Ascending aorta (tissue), 2 donors: ENCODE measurements at regions of chrX and their contacts with region 1.

Region 1: GRCh38 chrX:15674841-15675489 is 10.4 kb upstream of the CLTRN start:
- DNase-seq: peak; percentile 94 to 99
- H3K4me3 ChIP-seq: peak overlapping the region; percentile 80 to 87
- H3K27ac ChIP-seq: peak overlapping the region; percentile 97 to 99
- H3K4me1 ChIP-seq: peaks cover 0 to 8% of the 10 kb centered on the region in 2 donors
- H3K27me3 ChIP-seq: no peaks in the 10 kb centered on the region
- CTCF ChIP-seq: no peak

Region 2: GRCh38 chrX:13898083-13898482 is 1776.9 kb before region 1 on chrX:
- intact Hi-C with region 1: loop called (anchors 2 kb)
- DNase-seq: peak in 1 of 2 donors; percentile 69
- H3K4me3 ChIP-seq: no peak overlapping the region
- H3K27ac ChIP-seq: peak overlapping the region in 1 of 2 donors; percentile 23
- H3K4me1 ChIP-seq: peaks cover 0 to 33% of the 10 kb centered on the region in 2 donors
- H3K27me3 ChIP-seq: no peaks in the 10 kb centered on the region
- CTCF ChIP-seq: peak in 2 of 3 experiments; percentile 29 to 32

Region 3: GRCh38 chrX:15335135-15336022 is 339.6 kb before region 1 on chrX and contains the start of gene PIGA:
- intact Hi-C with region 1: loop called (anchors 10 kb)
- DNase-seq: peak; percentile 88 to 98
- H3K4me3 ChIP-seq: peak within 1 kb of the TSS; percentile 64 to 73
- H3K27ac ChIP-seq: peak within 1 kb of the TSS; percentile 77 to 85
- H3K4me1 ChIP-seq: no peaks in the 10 kb centered on the region
- H3K27me3 ChIP-seq: no peaks in the 10 kb centered on the region
- CTCF ChIP-seq: no peak
- total RNA-seq, gene PIGA: 54.6 TPM

Region 4: DNA sequence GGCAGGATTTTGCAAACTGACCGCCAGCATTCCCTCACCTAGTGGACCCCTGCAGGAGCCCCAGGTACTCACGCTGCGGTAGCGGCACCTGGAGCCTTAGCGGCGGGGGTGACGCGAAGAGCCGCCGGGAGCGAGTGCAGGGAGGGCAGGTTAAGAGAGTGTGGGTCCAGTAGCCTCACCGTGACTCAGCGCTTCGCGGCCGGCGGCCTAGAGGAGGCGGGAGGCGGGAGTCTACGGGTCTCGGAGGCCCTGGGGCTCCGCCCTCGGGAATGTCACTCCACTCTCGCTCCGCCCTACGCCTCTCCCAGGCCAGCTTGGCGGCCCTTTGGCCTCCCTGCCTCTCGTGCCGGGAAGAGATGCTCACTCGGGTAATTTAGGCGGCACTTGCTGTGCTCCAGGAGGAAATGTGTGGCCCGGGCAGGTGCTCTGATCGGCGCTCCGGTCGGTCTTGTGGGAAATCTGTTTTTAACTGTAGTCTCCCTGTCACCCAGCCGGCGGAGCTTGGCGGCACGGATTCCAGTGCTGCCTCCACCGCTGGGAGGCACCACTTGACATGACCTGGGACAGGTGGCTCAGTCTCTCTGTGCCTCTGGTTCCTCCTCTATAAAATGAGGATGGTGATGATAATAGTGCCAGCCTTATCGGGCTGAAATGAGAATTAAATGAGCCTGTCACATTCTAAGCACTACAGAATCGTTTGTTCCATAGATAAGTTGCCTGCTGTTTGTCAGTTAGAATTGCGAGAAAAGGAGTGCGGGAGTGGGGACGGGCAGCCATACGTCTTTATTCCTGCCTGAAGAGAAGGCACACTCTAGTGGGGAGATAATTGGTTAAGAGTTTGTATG is 181.6 kb before region 1 on chrX and contains the start of gene PIR:
- intact Hi-C with region 1: loop called (anchors 2 kb)
- DNase-seq: peak; percentile 57 to 93
- H3K4me3 ChIP-seq: peak within 1 kb of the TSS; percentile 49 to 70
- H3K27ac ChIP-seq: peak within 1 kb of the TSS; percentile 44 to 56
- H3K4me1 ChIP-seq: no peaks in the 10 kb centered on the region
- H3K27me3 ChIP-seq: no peaks in the 10 kb centered on the region
- CTCF ChIP-seq: peak in 2 of 3 experiments; percentile 36 to 56
- total RNA-seq, gene PIR: 14.6 TPM

Region 5: GRCh38 chrX:15749642-15750610 is 75.0 kb after region 1 on chrX:
- intact Hi-C with region 1: loop called (anchors 2 kb)
- DNase-seq: peak in 1 of 2 donors; percentile 72
- H3K4me3 ChIP-seq: peak overlapping the region in 1 of 2 donors; percentile 13
- H3K27ac ChIP-seq: peak overlapping the region; percentile 83 to 89
- H3K4me1 ChIP-seq: peaks cover 3 to 26% of the 10 kb centered on the region in 2 donors
- H3K27me3 ChIP-seq: no peaks in the 10 kb centered on the region
- CTCF ChIP-seq: no peak

Region 6: DNA sequence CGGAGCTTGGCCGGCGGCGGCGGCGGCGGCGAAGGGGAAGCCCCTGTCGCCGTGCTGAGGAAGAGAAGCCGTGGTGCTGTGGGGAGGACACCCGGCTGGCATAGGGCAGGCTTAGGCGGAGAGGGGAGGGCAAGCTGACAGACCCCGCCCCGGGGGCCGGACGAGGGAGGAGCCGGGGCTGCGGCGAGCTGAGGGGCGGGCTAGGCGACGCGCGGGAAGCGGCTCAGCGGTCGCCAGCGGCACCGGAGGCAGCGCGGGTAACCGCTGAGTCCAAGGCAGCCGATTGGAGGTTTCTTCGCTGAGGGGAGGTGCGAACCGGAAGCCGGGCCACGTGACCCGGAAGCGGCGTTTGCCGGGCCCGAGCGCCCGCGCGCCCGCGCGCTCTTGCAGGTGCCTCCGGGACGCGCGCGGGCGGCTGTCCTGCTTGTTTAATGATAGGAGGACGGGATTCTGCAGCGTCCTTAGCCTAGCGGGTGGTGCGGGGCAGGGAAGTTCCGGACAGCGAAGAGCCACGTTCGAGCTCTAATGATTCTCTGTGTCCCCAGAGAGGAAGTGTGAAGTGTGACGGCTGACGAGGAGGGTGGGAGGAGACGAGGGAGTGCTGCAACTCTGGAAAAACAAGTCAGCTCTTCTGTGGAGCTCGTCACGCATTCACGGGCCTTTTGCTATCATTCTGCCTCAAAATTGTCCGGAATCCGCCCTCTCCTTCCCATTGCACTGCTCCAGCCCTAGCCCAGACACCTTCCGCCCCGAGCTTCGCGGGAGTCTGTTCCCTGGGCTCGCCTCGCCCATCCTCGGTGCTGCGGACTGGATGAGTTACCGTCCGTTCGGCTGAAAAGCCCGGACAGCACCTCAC is 180.0 kb after region 1 on chrX and contains the start of gene AP1S2:
- intact Hi-C with region 1: loop called (anchors 1 kb)
- DNase-seq: peak; percentile 80 to 97
- H3K4me3 ChIP-seq: peak within 1 kb of the TSS; percentile 84
- H3K27ac ChIP-seq: peak within 1 kb of the TSS; percentile 92 to 93
- H3K4me1 ChIP-seq: peaks cover 0 to 9% of the 10 kb centered on the region in 2 donors
- H3K27me3 ChIP-seq: no peaks in the 10 kb centered on the region
- CTCF ChIP-seq: no peak
- total RNA-seq, gene AP1S2: 99.3 TPM